ENCODE measurements at regions of chr6 and their contacts with region 1.

Region 1: GRCh38 chr6:108113557-108114519 is 39.3 kb upstream of the OSTM1 start:
- DNase-seq: no peak
- ATAC-seq: no peak
- H3K4me3 ChIP-seq: no peak overlapping the region
- H3K4me3 Mint-ChIP-seq: peak overlapping the region; percentile 17 to 86 (median 60)
- H3K27ac ChIP-seq: no peak overlapping the region
- H3K27ac Mint-ChIP-seq: peak overlapping the region in 1 of 9 donors; percentile 14
- H3K4me1 ChIP-seq: peaks cover 17 to 33% of the 10 kb centered on the region in 2 donors
- H3K4me1 Mint-ChIP-seq: peaks cover 30 to 47% (median 40%) of the 10 kb centered on the region in 7 donors
- H3K27me3 ChIP-seq: peaks cover 8 to 25% of the 10 kb centered on the region in 2 donors
- H3K27me3 Mint-ChIP-seq: peaks cover 72 to 89% (median 85%) of the 10 kb centered on the region in 5 donors

Region 2: GRCh38 chr6:108133594-108134179 is 19.8 kb after region 1 on chr6:
- CTCF ChIA-PET with region 1: no interaction called
- POLR2A ChIA-PET with region 1: no interaction called
- intact Hi-C with region 1: loop called in 1 of 2 experiments (anchors 2 kb)
- DNase-seq: peak in 3 of 9 donors; percentile 12 to 31 (median 22)
- ATAC-seq: peak; percentile 65
- H3K4me3 ChIP-seq: peak overlapping the region; percentile 25
- H3K4me3 Mint-ChIP-seq: peak overlapping the region; percentile 80 to 94 (median 89)
- H3K27ac ChIP-seq: no peak overlapping the region
- H3K27ac Mint-ChIP-seq: no peak overlapping the region
- H3K4me1 ChIP-seq: no peaks in the 10 kb centered on the region
- H3K4me1 Mint-ChIP-seq: peaks cover 8 to 20% (median 15%) of the 10 kb centered on the region in 7 donors
- H3K27me3 ChIP-seq: peaks cover 4 to 11% of the 10 kb centered on the region in 2 donors
- H3K27me3 Mint-ChIP-seq: peaks cover 67 to 89% (median 80%) of the 10 kb centered on the region in 5 donors

Region 3: DNA sequence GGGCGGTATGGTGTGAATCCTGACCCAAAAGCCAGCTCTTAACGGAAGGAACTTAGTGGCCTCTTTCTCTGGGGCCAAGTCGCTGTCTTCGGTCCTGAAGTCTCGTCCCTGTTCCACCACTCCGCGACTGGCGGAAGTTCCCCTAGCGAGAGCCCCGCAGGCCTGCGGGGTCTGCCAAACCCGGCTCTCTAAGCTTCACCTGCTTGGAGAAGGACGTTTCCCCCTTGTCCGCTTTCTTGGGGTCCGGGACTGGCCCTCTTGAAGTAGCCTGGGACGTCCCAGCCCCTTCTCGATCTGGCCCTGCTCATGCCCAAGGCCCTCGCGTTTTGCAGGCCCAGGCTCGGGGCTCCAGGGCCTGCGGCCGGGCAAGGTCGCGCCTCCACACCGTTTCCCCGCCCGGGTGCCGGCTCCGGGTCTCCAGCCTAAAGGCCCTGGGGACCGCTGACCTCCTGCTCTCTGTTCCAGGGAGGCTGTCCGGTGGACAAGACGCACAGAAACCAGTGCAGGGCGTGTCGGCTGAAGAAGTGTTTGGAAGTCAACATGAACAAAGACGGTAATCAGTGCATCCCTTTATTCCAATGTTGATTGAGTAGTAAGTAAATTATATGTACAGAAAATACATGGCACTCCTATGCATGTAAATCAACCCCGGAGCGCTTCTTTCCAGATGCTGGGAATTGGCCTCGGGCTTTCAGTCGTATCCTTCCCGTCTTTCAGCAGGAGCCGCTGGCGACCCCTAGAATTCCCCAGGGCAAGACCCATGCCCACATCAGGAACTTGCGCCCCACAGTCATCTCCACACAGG is 60.7 kb after region 1 on chr6:
- CTCF ChIA-PET with region 1: no interaction called
- POLR2A ChIA-PET with region 1: no interaction called
- intact Hi-C with region 1: loop called in 1 of 2 experiments (anchors 2 kb)
- DNase-seq: peak in 4 of 9 donors; percentile 18 to 37 (median 26)
- ATAC-seq: peak; percentile 51
- H3K4me3 ChIP-seq: no peak overlapping the region
- H3K4me3 Mint-ChIP-seq: peak overlapping the region in 5 of 10 donors; percentile 64 to 76 (median 70)
- H3K27ac ChIP-seq: no peak overlapping the region
- H3K27ac Mint-ChIP-seq: no peak overlapping the region
- H3K4me1 ChIP-seq: peaks cover 2 to 11% of the 10 kb centered on the region in 2 donors
- H3K4me1 Mint-ChIP-seq: peaks cover 13 to 37% (median 26%) of the 10 kb centered on the region in 7 donors
- H3K27me3 ChIP-seq: peaks cover 17 to 40% of the 10 kb centered on the region in 2 donors
- H3K27me3 Mint-ChIP-seq: peaks cover 76 to 96% (median 88%) of the 10 kb centered on the region in 5 donors

Region 4: GRCh38 chr6:108492131-108492766 is 378.4 kb after region 1 on chr6:
- CTCF ChIA-PET with region 1: no interaction called
- POLR2A ChIA-PET with region 1: no interaction called
- intact Hi-C with region 1: loop called (anchors 1 kb)
- DNase-seq: peak in 3 of 9 donors; percentile 16 to 18 (median 18)
- ATAC-seq: peak; percentile 38
- H3K4me3 ChIP-seq: no peak overlapping the region
- H3K4me3 Mint-ChIP-seq: no peak overlapping the region
- H3K27ac ChIP-seq: no peak overlapping the region
- H3K27ac Mint-ChIP-seq: no peak overlapping the region
- H3K4me1 ChIP-seq: no peaks in the 10 kb centered on the region
- H3K4me1 Mint-ChIP-seq: no peaks in the 10 kb centered on the region
- H3K27me3 ChIP-seq: no peaks in the 10 kb centered on the region
- H3K27me3 Mint-ChIP-seq: peaks cover 0 to 11% (median 0%) of the 10 kb centered on the region in 5 donors

Region 5: GRCh38 chr6:109073344-109074132 is 959.7 kb after region 1 on chr6:
- CTCF ChIA-PET with region 1: no interaction called
- POLR2A ChIA-PET with region 1: no interaction called
- intact Hi-C with region 1: loop called in 1 of 2 experiments (anchors 5 kb)
- DNase-seq: peak in 7 of 9 donors; percentile 56 to 78 (median 72)
- ATAC-seq: peak; percentile 85
- H3K4me3 ChIP-seq: no peak overlapping the region
- H3K4me3 Mint-ChIP-seq: peak overlapping the region in 8 of 10 donors; percentile 1 to 64 (median 24)
- H3K27ac ChIP-seq: no peak overlapping the region
- H3K27ac Mint-ChIP-seq: peak overlapping the region in 4 of 9 donors; percentile 1 to 44 (median 4)
- H3K4me1 ChIP-seq: peaks cover 18 to 39% of the 10 kb centered on the region in 2 donors
- H3K4me1 Mint-ChIP-seq: peaks cover 15 to 37% (median 22%) of the 10 kb centered on the region in 7 donors
- H3K27me3 ChIP-seq: no peaks in the 10 kb centered on the region
- H3K27me3 Mint-ChIP-seq: peaks cover 0 to 12% (median 0%) of the 10 kb centered on the region in 5 donors

Measured in naive thymus-derived CD4-positive, alpha-beta T cell (primary cell).